ENCODE measurements at regions of chr20 and their contacts with region 1.

Region 1: DNA sequence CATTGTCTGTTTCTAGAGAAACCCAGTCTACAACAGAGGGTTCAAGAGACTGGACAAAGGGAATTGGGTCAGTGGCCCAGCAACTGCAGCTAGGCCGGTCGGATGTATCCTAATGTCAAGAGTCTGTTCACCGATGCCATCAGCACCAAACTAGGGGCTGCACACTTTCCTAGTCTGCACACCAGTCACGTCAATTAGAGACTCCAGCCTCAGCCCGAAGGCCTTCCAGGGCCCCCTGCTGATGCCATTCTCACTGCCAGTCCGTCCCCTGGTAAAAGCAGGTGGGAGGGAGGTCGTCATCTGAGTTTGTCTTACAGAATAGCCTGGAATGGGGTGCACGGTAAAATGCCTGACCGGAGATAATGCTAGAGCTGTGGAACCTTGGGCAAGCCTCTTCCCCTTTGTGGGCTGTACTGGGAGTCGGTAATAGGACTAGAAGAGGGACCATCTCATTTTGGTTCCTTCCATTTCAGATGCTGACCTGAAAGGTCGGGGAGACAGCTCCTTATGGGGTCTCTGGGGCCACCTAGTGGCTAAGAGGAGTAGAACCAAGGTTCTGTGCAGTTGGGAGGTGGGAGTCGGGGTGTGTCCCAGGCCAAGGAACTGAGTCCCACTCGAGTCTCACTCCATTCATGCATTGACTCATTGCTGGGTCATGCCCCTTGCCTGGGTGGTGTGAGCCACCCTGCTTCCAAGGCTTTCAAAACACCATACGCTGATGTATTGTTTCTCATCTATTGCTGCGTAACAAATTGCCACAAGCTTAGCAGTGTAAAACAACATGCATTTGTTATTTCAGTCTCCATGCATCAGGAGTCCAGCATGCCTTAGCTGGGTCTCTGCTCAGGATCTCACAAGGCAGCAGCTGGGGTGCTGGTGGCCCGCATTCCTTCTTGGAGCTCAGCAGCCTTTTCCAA is 5.1 kb downstream of the SOX12 start:
- DNase-seq: peak; percentile 75
- H3K4me3 Mint-ChIP-seq: no peak overlapping the region
- H3K27ac Mint-ChIP-seq: no peak overlapping the region
- H3K4me1 Mint-ChIP-seq: peaks cover 34% of the 10 kb centered on the region
- H3K27me3 Mint-ChIP-seq: peaks cover 19% of the 10 kb centered on the region

Region 2: GRCh38 chr20:258963-259362 is 71.5 kb before region 1 on chr20:
- CTCF ChIA-PET with region 1: interaction called, 10 read pairs
- DNase-seq: peak; percentile 31
- H3K4me3 Mint-ChIP-seq: no peak overlapping the region
- H3K27ac Mint-ChIP-seq: no peak overlapping the region
- H3K4me1 Mint-ChIP-seq: peaks cover 10% of the 10 kb centered on the region
- H3K27me3 Mint-ChIP-seq: peaks cover 23% of the 10 kb centered on the region

Region 3: GRCh38 chr20:266596-267562 is 63.6 kb before region 1 on chr20:
- CTCF ChIA-PET with region 1: interaction called, 21 read pairs
- DNase-seq: peak; percentile 93
- H3K4me3 Mint-ChIP-seq: peak overlapping the region; percentile 72
- H3K27ac Mint-ChIP-seq: no peak overlapping the region
- H3K4me1 Mint-ChIP-seq: peaks cover 10% of the 10 kb centered on the region
- H3K27me3 Mint-ChIP-seq: peaks cover 35% of the 10 kb centered on the region

Region 4: GRCh38 chr20:297098-297924 is 33.2 kb before region 1 on chr20 and contains the start of gene ZCCHC3:
- CTCF ChIA-PET with region 1: interaction called, 10 read pairs
- DNase-seq: peak; percentile 88
- H3K4me3 Mint-ChIP-seq: peak within 1 kb of the TSS; percentile 98
- H3K27ac Mint-ChIP-seq: peak within 1 kb of the TSS; percentile 100
- H3K4me1 Mint-ChIP-seq: peaks cover 50% of the 10 kb centered on the region
- H3K27me3 Mint-ChIP-seq: peaks cover 8% of the 10 kb centered on the region

Region 5: GRCh38 chr20:309841-310644 is 20.4 kb before region 1 on chr20:
- CTCF ChIA-PET with region 1: interaction called, 13 read pairs
- DNase-seq: peak; percentile 87
- H3K4me3 Mint-ChIP-seq: peak overlapping the region; percentile 65
- H3K27ac Mint-ChIP-seq: peak overlapping the region; percentile 28
- H3K4me1 Mint-ChIP-seq: peaks cover 19% of the 10 kb centered on the region
- H3K27me3 Mint-ChIP-seq: peaks cover 17% of the 10 kb centered on the region

Region 6: DNA sequence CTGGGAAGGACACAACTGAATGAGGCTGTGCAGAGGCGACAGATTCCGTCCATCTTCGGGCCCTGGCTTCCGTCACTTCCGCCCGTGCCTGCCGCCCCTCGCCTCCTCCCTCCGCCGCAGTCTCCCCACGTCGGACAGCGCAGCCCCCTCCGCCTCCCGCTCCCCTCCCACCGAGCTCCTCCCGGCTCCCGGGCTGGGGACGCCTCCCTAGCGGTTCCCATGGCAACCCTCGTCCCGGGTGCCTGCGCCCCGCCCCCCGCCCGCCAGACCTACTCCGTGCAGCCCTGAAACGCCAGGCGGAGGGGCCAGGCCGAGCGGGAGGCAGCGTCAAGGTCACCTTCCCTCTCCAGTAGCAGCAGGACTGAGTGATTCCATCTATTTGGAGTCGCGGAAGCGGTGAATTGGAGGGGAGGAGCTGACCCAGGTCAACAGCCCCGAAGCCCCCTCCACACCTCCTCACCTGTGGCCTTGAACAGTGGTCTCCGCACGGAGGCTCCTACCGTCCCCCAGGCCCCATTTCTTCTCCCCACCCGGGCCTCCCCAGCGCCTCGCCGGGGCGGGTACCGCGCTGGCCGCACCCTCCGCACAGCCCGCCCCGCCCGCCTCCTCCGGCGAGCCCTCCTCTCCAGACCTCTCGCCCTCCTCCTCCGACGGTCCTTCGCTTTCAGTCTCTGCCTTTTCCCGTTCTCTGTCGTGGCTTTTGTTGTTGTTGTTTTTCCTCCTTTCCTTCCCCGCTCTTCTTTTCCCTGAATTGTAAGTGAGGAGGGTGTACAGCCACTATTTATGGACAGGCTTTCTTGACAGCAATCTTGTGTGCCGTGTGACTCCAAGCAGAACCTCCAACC is 17.4 kb after region 1 on chr20:
- CTCF ChIA-PET with region 1: interaction called, 34 read pairs
- DNase-seq: peak; percentile 80
- H3K4me3 Mint-ChIP-seq: peak overlapping the region; percentile 84
- H3K27ac Mint-ChIP-seq: peak overlapping the region; percentile 12
- H3K4me1 Mint-ChIP-seq: peaks cover 29% of the 10 kb centered on the region
- H3K27me3 Mint-ChIP-seq: peaks cover 50% of the 10 kb centered on the region

Region 7: GRCh38 chr20:371755-372542 is 41.5 kb after region 1 on chr20:
- CTCF ChIA-PET with region 1: no interaction called
- DNase-seq: no peak
- H3K4me3 Mint-ChIP-seq: no peak overlapping the region
- H3K27ac Mint-ChIP-seq: peak overlapping the region; percentile 42
- H3K4me1 Mint-ChIP-seq: peaks cover 39% of the 10 kb centered on the region
- H3K27me3 Mint-ChIP-seq: peaks cover 4% of the 10 kb centered on the region

Region 8: GRCh38 chr20:458776-459175 is 128.3 kb after region 1 on chr20:
- CTCF ChIA-PET with region 1: no interaction called
- DNase-seq: no peak
- H3K4me3 Mint-ChIP-seq: no peak overlapping the region
- H3K27ac Mint-ChIP-seq: no peak overlapping the region
- H3K4me1 Mint-ChIP-seq: peaks cover 46% of the 10 kb centered on the region
- H3K27me3 Mint-ChIP-seq: no peaks in the 10 kb centered on the region

Measured in activated naive CD4-positive, alpha-beta T cell treated with anti-CD3 and anti-CD28 coated beads, Interleukin-2, amount 10 ng/mL, durations not matched to agents 7 days and 5 days (primary cell).